Esophagus squamous epithelium (tissue), 5 donors: ENCODE measurements at regions of chr1 and their contacts with region 1.

Region 1: DNA sequence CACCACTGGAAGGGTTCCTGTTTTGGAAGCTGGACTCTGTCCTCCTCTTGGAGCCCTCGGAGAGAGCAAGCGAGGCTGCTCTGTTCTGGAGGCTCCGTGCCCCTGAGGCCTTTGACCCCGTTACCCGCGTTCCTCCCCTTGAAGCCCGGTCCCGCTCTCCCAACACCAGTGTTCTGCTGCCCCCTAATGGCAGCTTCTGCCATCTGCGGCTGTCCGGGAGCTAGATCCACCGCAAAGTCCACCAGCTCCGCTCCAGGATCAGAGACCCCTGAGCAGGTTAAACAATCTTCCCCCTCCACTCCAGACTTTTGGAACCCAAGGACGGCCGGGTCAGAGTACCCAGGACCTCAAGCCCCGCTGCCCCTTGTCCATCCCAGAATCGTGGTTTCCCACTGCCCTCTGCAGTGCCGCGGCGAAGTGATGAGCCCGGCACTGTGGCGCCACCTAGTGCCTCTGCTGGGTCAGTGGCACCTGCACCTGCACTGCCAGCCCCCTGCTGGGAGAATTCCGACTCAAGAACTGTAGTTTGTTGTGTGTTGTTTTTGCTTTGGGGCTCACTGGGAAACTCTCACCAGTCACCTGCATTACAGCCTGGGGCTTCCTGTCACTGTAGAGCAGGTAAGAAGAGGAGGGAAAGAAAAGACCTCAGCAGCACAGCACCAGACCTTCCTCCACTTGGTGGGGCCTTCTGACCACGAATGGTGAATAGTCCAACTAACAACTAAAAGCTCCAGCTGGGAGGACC is 63.5 kb upstream of the NFASC start:
- DNase-seq: peak; percentile 24
- H3K4me3 ChIP-seq: peak overlapping the region; percentile 22 to 70 (median 43)
- H3K27ac ChIP-seq: no peak overlapping the region
- H3K4me1 ChIP-seq: peaks cover 0 to 28% (median 3%) of the 10 kb centered on the region in 3 donors
- H3K27me3 ChIP-seq: peaks cover 0 to 19% (median 0%) of the 10 kb centered on the region in 4 donors
- CTCF ChIP-seq: peak; percentile 93 to 98 (median 97)
- POLR2A ChIP-seq: no peak

Region 2: GRCh38 chr1:204565617-204566582 is 241.2 kb before region 1 on chr1:
- intact Hi-C with region 1: loop called (anchors 5 kb)
- DNase-seq: no peak
- H3K4me3 ChIP-seq: no peak overlapping the region
- H3K27ac ChIP-seq: no peak overlapping the region
- H3K4me1 ChIP-seq: peaks cover 0 to 25% (median 4%) of the 10 kb centered on the region in 3 donors
- H3K27me3 ChIP-seq: no peaks in the 10 kb centered on the region
- CTCF ChIP-seq: peak; percentile 45 to 78 (median 70)
- POLR2A ChIP-seq: no peak

Region 3: GRCh38 chr1:204941421-204942338 is 134.6 kb after region 1 on chr1:
- intact Hi-C with region 1: loop called (anchors 5 kb)
- DNase-seq: no peak
- H3K4me3 ChIP-seq: no peak overlapping the region
- H3K27ac ChIP-seq: no peak overlapping the region
- H3K4me1 ChIP-seq: peaks cover 0 to 4% (median 0%) of the 10 kb centered on the region in 3 donors
- H3K27me3 ChIP-seq: no peaks in the 10 kb centered on the region
- CTCF ChIP-seq: peak; percentile 48 to 92 (median 88)
- POLR2A ChIP-seq: no peak

Region 4: GRCh38 chr1:204989266-204990058 is 182.3 kb after region 1 on chr1:
- intact Hi-C with region 1: no loop called
- DNase-seq: no peak
- H3K4me3 ChIP-seq: no peak overlapping the region
- H3K27ac ChIP-seq: peak overlapping the region in 1 of 4 donors; percentile 21
- H3K4me1 ChIP-seq: no peaks in the 10 kb centered on the region
- H3K27me3 ChIP-seq: peaks cover 0 to 18% (median 0%) of the 10 kb centered on the region in 4 donors
- CTCF ChIP-seq: peak; percentile 65 to 97 (median 90)
- POLR2A ChIP-seq: no peak